AG04449 (cell line): ENCODE measurements at regions of chr16 and their contacts with region 1.

Region 1: DNA sequence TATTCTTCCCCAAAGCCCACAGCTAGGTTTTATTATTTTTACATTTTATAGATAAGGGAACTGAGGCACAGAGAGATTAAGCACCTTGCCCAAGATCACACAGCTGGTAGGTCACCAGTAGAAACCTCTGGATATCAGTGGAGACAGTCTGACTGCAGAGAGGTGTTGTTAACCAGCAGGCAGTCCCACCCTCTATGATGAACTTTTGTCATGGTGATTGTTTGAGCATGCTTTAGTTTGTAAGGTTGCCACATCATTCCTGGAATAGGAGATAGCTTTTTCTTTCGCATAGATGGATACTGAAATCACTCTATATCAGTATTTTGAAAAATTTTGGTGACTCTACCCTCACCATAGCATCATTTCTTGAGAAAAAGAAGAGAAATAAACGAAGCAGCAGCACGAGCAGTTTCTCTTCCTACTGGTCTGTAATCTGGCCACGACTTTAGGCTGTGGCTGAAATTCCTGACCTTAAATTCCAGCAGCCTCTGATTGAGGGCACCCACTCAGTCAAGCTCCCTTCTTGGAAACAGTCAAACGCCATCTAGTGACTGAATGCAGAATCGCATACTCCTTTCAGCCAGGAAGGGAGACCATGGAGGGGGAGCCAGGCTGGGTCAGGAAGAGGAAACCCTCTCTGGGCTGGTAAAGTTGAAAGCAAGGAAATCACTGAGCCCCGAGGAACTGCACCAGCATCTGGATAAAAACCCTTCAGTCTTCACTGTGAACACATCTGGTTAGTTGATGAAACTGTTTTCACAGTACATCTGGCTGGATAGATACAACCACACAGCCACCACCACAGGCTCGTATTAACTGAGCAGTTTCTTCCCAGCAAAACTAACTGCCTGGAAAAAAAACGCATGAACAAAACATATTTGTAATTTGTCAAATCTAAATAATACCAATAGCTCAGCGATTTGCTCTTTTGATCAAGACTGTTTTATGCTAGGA is 108.4 kb upstream of the XYLT1 start:
- DNase-seq: peak; percentile 59
- H3K4me3 ChIP-seq: no peak overlapping the region; the same call in 1 of the 2 replicates
- CTCF ChIP-seq: peak; percentile 88

Region 2: DNA sequence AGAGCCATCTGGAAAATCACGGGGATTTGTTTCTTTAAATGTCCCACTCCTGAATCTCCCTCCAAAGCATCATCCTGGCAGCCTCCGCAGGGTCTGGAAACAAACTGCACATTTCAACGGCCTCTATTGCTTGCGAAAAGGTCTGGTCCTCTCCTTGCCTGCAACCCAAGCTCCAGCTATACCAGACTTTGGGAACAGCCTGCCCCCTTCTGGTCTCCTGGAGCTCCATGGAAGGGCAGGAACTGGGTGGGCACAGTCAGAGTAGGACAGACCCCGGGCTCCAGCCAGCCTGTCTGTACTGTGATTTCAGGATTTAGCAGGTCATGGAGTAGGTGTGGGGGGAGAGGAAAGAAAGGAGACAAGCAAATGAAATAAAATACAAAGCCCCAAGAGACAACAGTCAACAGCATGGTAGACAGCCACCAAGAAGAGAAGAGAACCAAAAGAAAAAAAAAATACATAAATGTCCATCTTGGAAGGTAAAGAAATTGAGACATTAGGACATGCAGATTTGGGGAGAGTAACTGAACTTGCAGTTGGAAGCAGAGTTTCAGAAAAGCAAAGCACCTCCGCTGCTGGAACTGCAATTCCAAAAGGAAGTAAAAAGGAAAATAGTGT is 111.2 kb before region 1 on chr16:
- CTCF ChIA-PET with region 1: interaction called, 213 read pairs
- POLR2A ChIA-PET with region 1: interaction called, 3 read pairs
- DNase-seq: no peak
- H3K4me3 ChIP-seq: peak overlapping the region; percentile 84
- CTCF ChIP-seq: peak; percentile 93

Region 3: GRCh38 chr16:17497648-17498047 is 81.5 kb before region 1 on chr16:
- CTCF ChIA-PET with region 1: interaction called, 13 read pairs
- POLR2A ChIA-PET with region 1: no interaction called
- DNase-seq: no peak
- H3K4me3 ChIP-seq: no peak overlapping the region
- CTCF ChIP-seq: no peak

Region 4: DNA sequence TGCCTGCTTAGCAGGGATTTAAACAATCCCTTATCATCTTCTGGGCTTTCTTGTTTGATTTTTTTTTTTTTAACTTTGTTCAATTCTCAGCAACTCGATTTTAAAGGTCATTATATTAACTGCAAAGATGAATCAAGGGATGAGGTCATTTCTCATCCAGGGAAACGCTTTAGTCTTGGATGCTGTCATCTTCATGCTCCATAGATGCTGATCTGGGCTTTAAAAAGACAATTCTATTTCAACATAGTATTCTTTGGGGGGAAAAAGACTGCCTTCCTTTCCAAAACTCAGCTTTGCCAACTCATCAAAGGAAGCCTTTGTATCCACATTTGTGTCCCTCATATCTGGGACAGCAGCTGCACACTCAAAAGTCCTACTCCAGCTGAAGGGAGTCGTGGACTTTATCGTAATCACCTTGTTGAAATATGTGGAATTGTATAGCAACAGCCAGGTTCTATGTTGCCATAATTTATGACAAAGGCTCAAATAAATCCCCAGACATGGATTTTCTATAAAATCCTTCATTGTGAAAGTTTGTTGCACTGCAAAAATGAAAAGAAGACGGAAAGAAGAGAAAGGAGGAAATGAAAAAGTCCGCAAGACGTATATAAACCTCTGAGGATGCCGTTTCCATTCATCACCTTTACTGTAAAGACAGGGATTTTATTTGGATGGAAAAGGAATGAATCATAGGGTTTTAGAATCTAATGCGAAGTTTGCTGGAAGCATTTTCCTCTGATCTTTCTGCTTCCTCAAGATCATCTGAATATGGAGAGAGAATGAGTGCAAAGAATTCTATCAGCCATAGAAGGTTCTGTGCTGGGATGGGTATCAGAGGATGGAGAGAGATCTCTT is 59.9 kb before region 1 on chr16:
- CTCF ChIA-PET with region 1: interaction called, 24 read pairs
- POLR2A ChIA-PET with region 1: no interaction called
- DNase-seq: no peak
- H3K4me3 ChIP-seq: no peak overlapping the region
- CTCF ChIP-seq: no peak

Region 5: DNA sequence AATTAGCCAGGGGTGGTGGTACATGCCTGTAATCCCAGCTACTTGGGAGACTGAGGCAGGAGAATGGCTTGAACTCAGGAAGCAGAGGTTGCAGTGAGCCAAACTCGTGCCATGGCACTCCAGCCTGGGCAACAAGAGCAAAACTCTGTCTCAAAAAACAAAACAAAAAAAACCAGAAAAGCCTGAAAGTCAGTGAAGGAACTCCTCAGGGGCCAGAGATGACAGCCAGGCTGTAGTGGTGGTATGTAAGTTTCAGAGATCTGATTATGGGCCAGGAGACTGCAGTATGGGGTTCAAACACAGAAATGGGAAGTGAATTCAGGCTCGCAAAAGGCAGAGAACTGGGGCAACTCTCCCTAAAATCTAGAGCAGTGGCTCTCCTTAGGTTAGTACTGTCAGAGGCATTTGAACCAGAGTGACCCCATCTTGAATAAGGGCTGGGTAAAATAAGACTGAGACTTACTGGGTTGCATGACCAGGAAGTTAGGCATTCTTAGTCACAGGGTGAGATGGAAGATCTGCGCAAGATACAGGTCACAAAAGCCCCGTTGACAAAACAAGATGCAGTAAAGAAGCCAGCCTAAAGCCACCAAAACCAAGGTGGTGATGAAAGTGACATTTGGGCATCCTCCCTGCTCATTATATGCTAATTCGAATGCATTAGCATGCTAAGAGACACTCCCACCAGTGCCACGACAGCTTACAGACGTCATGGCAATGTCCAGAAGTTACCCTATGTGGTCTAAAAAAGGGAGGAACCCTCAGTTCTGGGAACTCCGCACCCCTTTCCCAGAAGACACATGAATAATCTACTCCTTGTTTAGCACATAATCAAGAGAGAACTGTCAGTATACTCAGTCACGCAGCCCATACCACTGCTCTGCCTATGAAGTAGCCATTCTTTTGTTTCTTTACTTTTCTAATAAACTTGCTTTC is 11.8 kb after region 1 on chr16:
- CTCF ChIA-PET with region 1: interaction called, 31 read pairs
- POLR2A ChIA-PET with region 1: no interaction called
- DNase-seq: no peak
- H3K4me3 ChIP-seq: no peak overlapping the region
- CTCF ChIP-seq: no peak

Region 6: DNA sequence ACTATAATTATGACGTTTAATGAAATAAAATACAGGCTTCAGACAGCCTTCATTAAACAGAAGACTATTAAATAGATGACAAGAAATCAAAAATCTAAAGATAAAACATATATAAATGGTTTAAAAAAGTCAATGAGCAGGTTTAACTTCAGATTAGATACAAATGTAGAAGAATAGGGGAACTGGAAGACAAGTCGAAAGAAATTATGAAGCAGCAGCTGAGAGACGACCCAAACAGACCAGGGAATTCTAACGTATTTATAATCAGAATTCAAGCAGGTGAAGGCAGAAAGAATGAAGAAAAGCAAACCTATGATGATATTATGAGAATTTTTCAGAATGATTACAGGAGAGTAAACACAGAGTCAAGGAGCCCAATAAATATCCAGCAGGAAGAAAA is 126.6 kb after region 1 on chr16:
- CTCF ChIA-PET with region 1: no interaction called
- POLR2A ChIA-PET with region 1: no interaction called
- DNase-seq: no peak
- H3K4me3 ChIP-seq: no peak overlapping the region
- CTCF ChIP-seq: no peak

Region 7: DNA sequence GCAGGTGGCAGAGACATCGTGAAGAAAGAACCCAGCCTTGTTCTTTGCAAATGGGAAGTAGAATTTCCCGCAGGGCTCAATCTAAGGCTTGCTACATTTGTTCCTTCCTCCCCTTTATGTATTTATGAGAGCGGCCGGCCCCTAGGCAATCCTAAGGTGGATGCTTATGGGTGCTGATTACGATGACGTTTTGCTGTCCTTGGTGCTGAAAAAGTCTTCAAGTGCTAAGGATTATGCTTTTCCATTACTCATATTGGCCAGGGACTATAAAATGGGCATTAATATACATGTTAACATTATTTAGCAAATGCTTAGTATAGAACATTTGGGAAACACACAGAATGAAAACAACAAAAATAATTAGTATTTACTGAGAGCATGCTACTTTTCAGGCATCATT is 204.9 kb after region 1 on chr16:
- CTCF ChIA-PET with region 1: no interaction called
- POLR2A ChIA-PET with region 1: no interaction called
- DNase-seq: no peak
- H3K4me3 ChIP-seq: no peak overlapping the region
- CTCF ChIP-seq: no peak

Region 8: DNA sequence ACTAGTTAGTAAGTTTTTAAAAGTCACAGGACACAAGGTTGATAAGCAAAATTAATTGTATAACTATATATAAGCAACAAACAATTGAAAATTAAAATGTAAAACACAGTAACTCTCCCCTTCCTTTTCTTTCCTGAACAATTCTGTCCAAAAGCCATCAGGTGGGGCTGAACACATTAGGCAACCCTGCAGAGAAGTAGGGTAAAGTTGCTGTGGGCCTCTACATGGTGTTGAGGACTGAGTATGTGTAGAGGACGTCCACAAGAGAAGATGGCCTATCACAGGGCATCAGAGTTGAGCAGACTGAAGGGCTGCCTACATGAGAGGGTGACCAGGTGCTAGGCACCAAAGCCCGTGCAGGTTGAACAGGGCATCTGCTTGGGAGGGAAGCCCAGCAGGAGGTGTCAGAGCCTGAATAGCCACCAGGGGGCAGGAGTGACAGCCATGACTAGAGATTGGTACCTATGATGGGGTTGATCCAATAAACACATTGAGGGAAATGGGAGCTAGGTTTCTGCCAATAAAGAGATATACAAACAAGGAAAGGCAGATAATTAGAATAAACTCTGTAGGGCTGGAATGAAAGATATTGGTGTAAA is 342.3 kb after region 1 on chr16:
- CTCF ChIA-PET with region 1: no interaction called
- POLR2A ChIA-PET with region 1: no interaction called
- DNase-seq: no peak
- H3K4me3 ChIP-seq: no peak overlapping the region
- CTCF ChIP-seq: peak; percentile 37